ENCODE measurements at regions of chr6 and their contacts with region 1.

Region 1: GRCh38 chr6:152151920-152152319 is 344.4 kb downstream of the ESR1 start:
- DNase-seq: no peak
- ATAC-seq: peak; percentile 48
- H3K4me3 ChIP-seq: no peak overlapping the region
- H3K4me3 Mint-ChIP-seq: no peak overlapping the region
- H3K27ac ChIP-seq: no peak overlapping the region
- H3K27ac Mint-ChIP-seq: peak overlapping the region in 8 of 9 donors; percentile 3 to 87 (median 68)
- H3K4me1 ChIP-seq: no peaks in the 10 kb centered on the region
- H3K4me1 Mint-ChIP-seq: peaks cover 0 to 8% (median 0%) of the 10 kb centered on the region in 7 donors
- H3K27me3 ChIP-seq: no peaks in the 10 kb centered on the region
- H3K27me3 Mint-ChIP-seq: no peaks in the 10 kb centered on the region

Region 2: GRCh38 chr6:152170705-152171667 is 19.1 kb after region 1 on chr6:
- CTCF ChIA-PET with region 1: interaction called, 3 read pairs
- POLR2A ChIA-PET with region 1: no interaction called
- intact Hi-C with region 1: loop called in 1 of 2 experiments (anchors 2 kb)
- DNase-seq: peak in 3 of 9 donors; percentile 11 to 37 (median 22)
- ATAC-seq: peak; percentile 87
- H3K4me3 ChIP-seq: peak overlapping the region; percentile 16
- H3K4me3 Mint-ChIP-seq: peak overlapping the region in 9 of 10 donors; percentile 14 to 76 (median 55)
- H3K27ac ChIP-seq: peak overlapping the region; percentile 12
- H3K27ac Mint-ChIP-seq: peak overlapping the region; percentile 65 to 94 (median 88)
- H3K4me1 ChIP-seq: peaks cover 12 to 25% of the 10 kb centered on the region in 2 donors
- H3K4me1 Mint-ChIP-seq: peaks cover 23 to 71% (median 57%) of the 10 kb centered on the region in 7 donors
- H3K27me3 ChIP-seq: no peaks in the 10 kb centered on the region
- H3K27me3 Mint-ChIP-seq: no peaks in the 10 kb centered on the region

Measured in naive thymus-derived CD4-positive, alpha-beta T cell (primary cell).